SK-N-SH (cell line): ENCODE measurements at regions of chrX and their contacts with region 1.

Region 1: DNA sequence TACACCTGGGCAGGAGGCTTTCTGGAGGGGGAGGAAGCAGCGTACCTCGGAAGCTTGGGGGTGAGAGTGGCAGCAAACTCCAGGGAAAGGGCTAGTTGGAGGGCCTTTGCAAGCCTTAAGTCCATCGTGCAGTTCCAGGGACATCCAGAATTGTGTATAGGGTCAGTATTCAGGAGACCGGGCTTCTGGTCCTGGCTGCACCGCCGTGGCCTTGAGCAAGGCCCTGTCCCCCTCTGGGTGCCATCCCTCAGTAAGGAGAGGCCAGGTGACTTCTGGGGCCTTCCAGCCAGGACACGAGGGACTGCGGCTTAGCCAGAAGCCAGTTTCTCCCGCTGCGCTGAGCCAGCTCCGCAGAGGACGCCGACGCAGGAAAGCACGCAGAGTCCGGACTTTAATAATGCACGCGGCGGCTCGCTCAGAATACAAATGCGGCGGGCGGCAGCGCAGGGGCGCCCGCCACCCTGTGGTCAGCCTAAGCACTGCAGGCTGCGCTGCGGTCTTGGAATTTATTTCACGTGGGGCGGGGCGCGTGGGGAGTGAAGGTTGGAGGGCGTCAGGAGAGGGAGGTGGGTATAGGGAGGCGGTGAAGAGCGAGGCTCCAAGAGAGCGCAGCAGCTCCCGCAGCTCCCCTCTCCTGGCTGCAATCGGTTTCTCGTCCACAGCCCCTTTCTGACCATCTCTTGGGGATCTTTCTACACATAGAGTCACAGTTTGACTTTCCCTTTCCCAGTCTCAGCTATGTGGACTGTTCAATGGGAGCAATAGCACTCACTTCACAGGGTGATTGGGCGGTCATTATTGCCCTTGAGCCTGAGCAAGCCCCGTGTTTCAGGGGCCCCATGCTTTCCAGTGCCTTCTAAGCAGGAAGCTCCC is 94.1 kb upstream of the GPR50 start:
- DNase-seq: peak; percentile 79
- H3K4me3 ChIP-seq: peak overlapping the region in 1 of 2 experiments; percentile 31; a peak in 1 of 4 replicates
- H3K27ac ChIP-seq: no peak overlapping the region
- H3K4me1 ChIP-seq: peaks cover 0 to 3% of the 10 kb centered on the region in 2 experiments; a peak in 1 of 4 replicates
- H3K27me3 ChIP-seq: peaks cover 24% of the 10 kb centered on the region; the same call in 1 of the 2 replicates
- CTCF ChIP-seq: peak; percentile 92
- EP300 ChIP-seq: no peak
- RAD21 ChIP-seq: peak; percentile 77

Region 2: GRCh38 chrX:150772150-150772970 is 310.0 kb before region 1 on chrX:
- CTCF ChIA-PET with region 1: interaction called, 219 read pairs
- POLR2A ChIA-PET with region 1: no interaction called
- DNase-seq: peak; percentile 89
- H3K4me3 ChIP-seq: no peak overlapping the region; a peak in 1 of 4 replicates
- H3K27ac ChIP-seq: no peak overlapping the region
- H3K4me1 ChIP-seq: no peaks in the 10 kb centered on the region; a peak in 1 of 4 replicates
- H3K27me3 ChIP-seq: peaks cover 5% of the 10 kb centered on the region; the same call in 1 of the 2 replicates
- CTCF ChIP-seq: peak; percentile 76
- EP300 ChIP-seq: no peak
- RAD21 ChIP-seq: peak; percentile 83